T-cell (primary cell): ENCODE measurements at regions of chrX and their contacts with region 1.

Region 1: DNA sequence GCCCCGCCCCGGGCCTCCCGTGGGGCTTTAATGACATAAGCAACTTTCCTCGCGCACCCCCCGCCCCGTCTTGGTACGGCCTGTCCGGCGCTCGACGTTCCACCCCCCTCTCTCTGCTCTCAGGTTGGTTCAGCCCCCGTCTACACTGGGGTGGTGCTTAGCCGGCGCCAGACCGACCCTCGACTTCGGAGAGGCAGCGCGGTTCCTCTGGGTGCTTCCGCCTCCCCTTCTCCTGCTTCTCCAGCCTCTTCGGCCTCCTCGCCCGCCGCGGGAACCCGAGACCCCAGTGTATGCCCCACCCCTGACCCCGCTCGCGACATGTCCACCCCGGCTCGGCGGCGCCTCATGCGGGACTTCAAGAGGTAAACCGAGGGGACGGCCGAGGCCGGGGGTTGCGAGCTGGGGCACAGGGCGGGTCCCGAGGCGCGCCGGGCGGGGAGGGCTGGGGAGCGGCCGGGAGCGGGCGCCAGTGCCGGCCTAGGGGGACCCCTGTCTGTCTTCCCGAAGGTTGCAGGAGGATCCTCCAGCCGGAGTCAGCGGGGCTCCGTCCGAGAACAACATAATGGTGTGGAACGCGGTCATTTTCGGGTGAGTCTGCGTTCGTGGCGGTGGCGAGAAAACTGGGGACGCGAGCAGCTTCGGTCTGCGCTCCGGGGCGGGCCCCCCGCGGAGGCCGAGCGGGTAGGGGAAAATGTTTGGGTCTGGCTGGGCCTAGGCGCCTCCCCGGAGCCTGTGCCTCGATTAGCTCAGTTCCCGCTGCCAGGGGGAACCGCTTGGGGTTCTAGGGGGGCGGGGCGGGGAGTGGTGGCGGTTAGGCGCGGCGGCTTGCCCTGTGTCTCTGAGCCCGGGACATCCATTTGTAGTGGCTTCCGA is at the start of gene UBE2A:
- DNase-seq: peak; percentile 75 to 92 (median 86)
- ATAC-seq: peak; percentile 91 to 96 (median 92)
- H3K4me3 ChIP-seq: peak within 1 kb of the TSS; percentile 62 to 76
- H3K4me3 Mint-ChIP-seq: peak within 1 kb of the TSS; percentile 83 to 92 (median 90)
- H3K27ac ChIP-seq: peak within 1 kb of the TSS; percentile 84
- H3K27ac Mint-ChIP-seq: peak within 1 kb of the TSS; percentile 91 to 95
- H3K4me1 ChIP-seq: peaks cover 4 to 15% of the 10 kb centered on the region in 2 experiments
- H3K4me1 Mint-ChIP-seq: peaks cover 10 to 34% (median 18%) of the 10 kb centered on the region in 3 donors
- H3K27me3 ChIP-seq: no peaks in the 10 kb centered on the region
- H3K27me3 Mint-ChIP-seq: peaks cover 0 to 17% of the 10 kb centered on the region in 2 donors
- total RNA-seq, gene UBE2A: 40.2 to 75.3 (median 44.8) TPM

Region 2: GRCh38 chrX:118100091-118100490 is 1474.5 kb before region 1 on chrX:
- CTCF ChIA-PET with region 1: no interaction called
- POLR2A ChIA-PET with region 1: no interaction called
- DNase-seq: no peak
- ATAC-seq: no peak
- H3K4me3 ChIP-seq: no peak overlapping the region
- H3K4me3 Mint-ChIP-seq: no peak overlapping the region
- H3K27ac ChIP-seq: no peak overlapping the region
- H3K27ac Mint-ChIP-seq: no peak overlapping the region
- H3K4me1 ChIP-seq: no peaks in the 10 kb centered on the region
- H3K4me1 Mint-ChIP-seq: peaks cover 0 to 3% (median 0%) of the 10 kb centered on the region in 3 donors
- H3K27me3 ChIP-seq: no peaks in the 10 kb centered on the region
- H3K27me3 Mint-ChIP-seq: peaks cover 0 to 9% of the 10 kb centered on the region in 2 donors

Region 3: DNA sequence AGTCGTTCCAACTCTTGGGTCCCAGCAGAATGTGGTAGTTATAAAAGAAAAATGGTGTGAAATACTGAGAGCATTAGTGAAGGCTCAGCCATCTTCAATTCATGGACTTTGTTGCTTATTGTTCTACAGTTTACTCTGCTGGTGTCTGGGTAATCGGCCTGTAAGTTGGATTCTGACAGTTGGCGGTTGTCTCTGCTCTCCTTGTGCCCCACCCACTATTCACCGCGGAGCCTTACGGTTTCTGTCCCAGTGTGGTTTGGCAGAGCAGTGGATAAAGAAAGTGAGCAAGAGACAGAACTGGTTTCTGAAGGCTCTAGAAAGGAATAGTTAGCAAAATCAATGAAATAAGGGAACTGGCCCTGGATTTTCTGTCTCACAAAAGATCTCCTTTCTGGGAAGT is 591.1 kb before region 1 on chrX:
- CTCF ChIA-PET with region 1: no interaction called
- POLR2A ChIA-PET with region 1: interaction called in 1 of 2 experiments, 16 read pairs
- DNase-seq: no peak
- ATAC-seq: no peak
- H3K4me3 ChIP-seq: no peak overlapping the region
- H3K4me3 Mint-ChIP-seq: no peak overlapping the region
- H3K27ac ChIP-seq: no peak overlapping the region
- H3K27ac Mint-ChIP-seq: no peak overlapping the region
- H3K4me1 ChIP-seq: no peaks in the 10 kb centered on the region
- H3K4me1 Mint-ChIP-seq: peaks cover 0 to 15% (median 5%) of the 10 kb centered on the region in 3 donors
- H3K27me3 ChIP-seq: no peaks in the 10 kb centered on the region
- H3K27me3 Mint-ChIP-seq: peaks cover 0 to 27% of the 10 kb centered on the region in 2 donors

Region 4: DNA sequence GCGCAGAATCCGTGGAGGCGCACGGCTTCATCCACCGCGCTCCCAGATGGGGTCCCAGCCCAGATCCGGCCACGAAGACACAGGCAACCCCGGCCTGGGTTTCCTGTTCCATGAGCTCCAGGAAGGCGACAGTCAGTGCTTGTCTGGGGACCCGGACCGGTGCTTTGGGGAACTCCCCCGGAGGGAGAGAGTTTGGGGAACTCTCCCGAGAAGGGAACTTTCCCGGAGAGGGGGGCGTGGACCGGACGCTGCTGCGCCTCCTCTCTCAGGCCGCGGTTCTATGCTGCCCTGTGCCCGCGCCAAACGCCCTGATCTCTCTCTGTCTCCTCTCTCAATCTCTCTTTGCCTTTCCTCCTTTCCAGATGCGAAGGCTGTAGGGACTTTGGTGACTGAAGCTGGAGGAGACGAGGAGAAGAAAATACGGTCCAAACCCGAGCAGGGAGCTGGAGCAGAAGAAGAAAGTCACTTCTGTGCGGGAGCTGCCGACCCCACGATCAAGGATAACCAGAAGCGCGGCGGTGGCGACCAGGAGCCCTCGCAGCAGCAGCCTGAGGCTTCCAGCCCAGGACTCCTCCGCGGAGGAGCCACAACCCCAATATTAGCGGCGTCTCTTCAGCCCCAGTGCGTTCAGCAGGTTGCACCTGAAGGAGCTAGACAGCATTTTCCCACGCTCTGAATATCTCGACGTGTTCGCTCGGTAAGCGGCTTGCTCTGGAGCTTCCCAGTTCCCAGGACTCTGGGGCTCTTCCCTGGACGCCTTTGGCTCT is 416.6 kb after region 1 on chrX:
- CTCF ChIA-PET with region 1: no interaction called
- POLR2A ChIA-PET with region 1: no interaction called
- DNase-seq: peak in 2 of 35 experiments; percentile 1 to 9
- ATAC-seq: peak in 2 of 4 experiments; percentile 19 to 50
- H3K4me3 ChIP-seq: peak overlapping the region; percentile 23 to 26
- H3K4me3 Mint-ChIP-seq: peak overlapping the region; percentile 47 to 76 (median 50)
- H3K27ac ChIP-seq: no peak overlapping the region
- H3K27ac Mint-ChIP-seq: no peak overlapping the region
- H3K4me1 ChIP-seq: peaks cover 0 to 23% of the 10 kb centered on the region in 2 experiments
- H3K4me1 Mint-ChIP-seq: peaks cover 13 to 21% (median 14%) of the 10 kb centered on the region in 3 donors
- H3K27me3 ChIP-seq: peaks cover 13 to 50% of the 10 kb centered on the region in 2 experiments
- H3K27me3 Mint-ChIP-seq: peaks cover 67 to 70% of the 10 kb centered on the region in 2 donors